Breast epithelium (tissue), 4 donors: ENCODE measurements at regions of chr16 and their contacts with region 1.

Region 1: GRCh38 chr16:53549970-53550690 is 47.1 kb upstream of the AKTIP start:
- DNase-seq: peak; percentile 46 to 58
- H3K4me3 ChIP-seq: peak overlapping the region in 2 of 3 donors; percentile 16 to 36
- H3K27ac ChIP-seq: peak overlapping the region; percentile 48 to 54
- H3K4me1 ChIP-seq: no peaks in the 10 kb centered on the region
- H3K27me3 ChIP-seq: no peaks in the 10 kb centered on the region
- CTCF ChIP-seq: peak in 2 of 3 donors; percentile 53 to 63
- POLR2A ChIP-seq: no peak

Region 2: DNA sequence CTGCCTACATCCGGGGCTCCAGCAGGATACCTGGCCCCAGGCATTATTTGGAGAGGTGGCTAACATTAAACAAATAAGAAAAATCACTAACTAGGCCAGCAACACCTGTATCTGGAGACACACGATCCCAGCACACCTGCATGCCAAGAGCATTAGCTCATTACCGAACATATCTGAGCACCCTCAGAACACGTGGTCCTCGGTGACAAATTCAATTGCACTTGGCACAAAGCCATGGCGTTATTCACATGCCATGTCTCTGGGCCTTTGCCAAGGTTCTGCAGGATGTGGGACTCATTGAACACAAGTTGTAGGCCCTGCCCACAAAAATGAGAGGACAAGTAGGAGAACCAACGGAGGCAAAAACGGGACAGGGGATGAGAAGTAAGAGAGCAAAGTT is 1555.5 kb before region 1 on chr16:
- intact Hi-C with region 1: no loop called
- DNase-seq: peak; percentile 57 to 88
- H3K4me3 ChIP-seq: no peak overlapping the region
- H3K27ac ChIP-seq: no peak overlapping the region
- H3K4me1 ChIP-seq: no peaks in the 10 kb centered on the region
- H3K27me3 ChIP-seq: no peaks in the 10 kb centered on the region
- CTCF ChIP-seq: no peak
- POLR2A ChIP-seq: no peak

Region 3: GRCh38 chr16:52855463-52855862 is 694.7 kb before region 1 on chr16:
- intact Hi-C with region 1: loop called (anchors 5 kb)
- DNase-seq: no peak
- H3K4me3 ChIP-seq: no peak overlapping the region
- H3K27ac ChIP-seq: no peak overlapping the region
- H3K4me1 ChIP-seq: no peaks in the 10 kb centered on the region
- H3K27me3 ChIP-seq: no peaks in the 10 kb centered on the region
- CTCF ChIP-seq: no peak
- POLR2A ChIP-seq: no peak

Region 4: DNA sequence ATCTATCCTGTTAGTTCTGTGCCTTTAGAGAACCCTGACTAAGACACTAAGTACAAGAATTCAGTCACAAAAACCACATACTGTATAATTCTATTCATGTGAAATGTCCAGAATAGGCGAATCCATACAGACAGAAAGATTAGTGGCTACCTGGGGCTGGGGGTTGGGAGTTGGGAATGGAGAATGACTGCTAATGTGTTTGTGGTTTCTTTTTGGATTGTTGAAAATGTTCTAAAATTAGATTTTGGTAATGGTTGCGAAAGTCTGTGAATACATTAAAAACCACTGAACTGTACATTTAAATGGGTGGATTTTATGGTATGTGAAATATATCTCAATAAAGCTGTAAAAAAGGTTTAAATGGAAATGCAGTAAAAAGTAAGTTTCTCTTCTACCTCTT is 33.3 kb after region 1 on chr16:
- intact Hi-C with region 1: no loop called
- DNase-seq: no peak
- H3K4me3 ChIP-seq: no peak overlapping the region
- H3K27ac ChIP-seq: no peak overlapping the region
- H3K4me1 ChIP-seq: no peaks in the 10 kb centered on the region
- H3K27me3 ChIP-seq: no peaks in the 10 kb centered on the region
- CTCF ChIP-seq: no peak
- POLR2A ChIP-seq: no peak

Region 5: DNA sequence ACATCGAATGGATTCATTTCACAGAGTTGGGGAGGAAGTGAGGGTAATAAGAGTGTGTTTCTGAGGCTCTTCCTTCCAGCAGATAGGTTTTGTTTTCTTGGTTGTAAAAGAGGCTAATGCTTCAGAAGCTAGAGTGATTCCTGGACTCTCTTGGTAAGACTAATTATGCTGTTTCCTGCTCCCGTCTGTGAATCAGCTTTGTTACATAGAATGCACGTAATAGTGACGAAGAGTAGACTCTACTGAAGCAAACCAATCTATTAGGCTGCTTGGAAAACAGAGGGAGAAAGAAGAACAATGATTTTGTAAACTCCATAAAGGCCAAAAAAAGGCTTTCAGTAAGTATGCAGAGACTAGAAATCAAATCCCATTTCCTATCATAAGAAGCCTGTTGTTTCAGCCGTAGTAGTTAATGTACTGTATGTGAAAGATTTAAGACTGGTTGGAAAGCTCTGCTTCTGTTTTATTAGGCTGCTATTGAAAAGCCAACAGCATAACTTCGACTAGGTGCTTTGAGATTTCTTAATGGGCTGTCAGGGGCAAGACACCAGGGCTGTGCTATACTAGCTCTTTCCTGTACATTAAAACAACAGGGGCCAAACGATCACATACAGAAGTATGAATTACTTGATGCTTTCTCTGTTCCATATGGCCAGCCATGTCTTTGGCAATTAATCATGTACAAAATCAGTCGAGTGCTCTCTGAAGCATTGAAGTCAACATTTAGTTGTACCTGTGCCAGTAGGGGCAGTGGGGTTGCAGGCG is 372.9 kb after region 1 on chr16:
- intact Hi-C with region 1: loop called (anchors 10 kb)
- DNase-seq: no peak
- H3K4me3 ChIP-seq: no peak overlapping the region
- H3K27ac ChIP-seq: no peak overlapping the region
- H3K4me1 ChIP-seq: peaks cover 0 to 5% of the 10 kb centered on the region in 2 donors
- H3K27me3 ChIP-seq: no peaks in the 10 kb centered on the region
- CTCF ChIP-seq: no peak
- POLR2A ChIP-seq: no peak